IMR-90 (cell line): ENCODE measurements at regions of chr6 and their contacts with region 1.

Region 1: DNA sequence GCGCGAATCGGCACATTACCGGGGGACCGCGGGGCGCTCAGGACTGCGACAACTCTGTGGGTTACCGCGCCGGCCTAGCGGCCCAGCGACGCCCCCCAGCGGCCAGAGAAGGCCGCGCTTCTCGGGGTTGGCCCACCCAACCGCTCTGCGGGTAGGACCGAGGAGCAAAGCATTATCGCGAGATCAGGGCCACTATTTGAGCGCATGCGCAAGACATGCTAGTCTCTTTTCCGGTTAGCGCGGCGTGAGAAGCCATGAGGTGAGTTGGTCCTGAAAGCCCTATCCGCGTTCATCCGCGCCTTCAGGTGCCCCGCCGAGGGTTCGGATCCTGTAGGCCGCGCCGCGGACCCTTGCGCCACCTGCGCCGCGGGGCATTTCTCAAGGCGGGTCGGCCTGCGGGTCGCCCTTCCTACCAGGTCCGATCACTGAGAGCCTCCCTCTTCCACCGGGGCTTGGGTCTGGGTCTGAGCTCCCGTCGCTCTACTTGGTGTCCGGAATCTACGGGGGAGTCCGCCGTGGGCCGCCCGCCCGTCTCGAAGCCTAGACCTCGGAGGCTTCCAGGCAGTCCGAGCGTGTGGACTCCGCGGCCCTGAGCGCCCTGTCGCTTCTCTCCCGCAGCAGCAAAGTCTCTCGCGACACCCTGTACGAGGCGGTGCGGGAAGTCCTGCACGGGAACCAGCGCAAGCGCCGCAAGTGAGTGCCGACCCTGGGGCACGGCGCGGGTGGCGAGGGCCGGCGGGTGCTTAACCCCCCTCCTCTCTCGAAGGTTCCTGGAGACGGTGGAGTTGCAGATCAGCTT is at the start of gene RPL10A:
- DNase-seq: peak; percentile 96
- ATAC-seq: peak; percentile 88
- H3K4me3 ChIP-seq: peak within 1 kb of the TSS; percentile 71
- H3K27ac ChIP-seq: peak within 1 kb of the TSS; percentile 79
- H3K4me1 ChIP-seq: peaks cover 10% of the 10 kb centered on the region
- H3K27me3 ChIP-seq: no peaks in the 10 kb centered on the region
- CTCF ChIP-seq: peak; percentile 99
- POLR2A ChIP-seq: peak; percentile 99
- RAD21 ChIP-seq: peak; percentile 89
- total RNA-seq, gene RPL10A: 1,746 and 2,310 TPM in 2 replicates

Region 2: DNA sequence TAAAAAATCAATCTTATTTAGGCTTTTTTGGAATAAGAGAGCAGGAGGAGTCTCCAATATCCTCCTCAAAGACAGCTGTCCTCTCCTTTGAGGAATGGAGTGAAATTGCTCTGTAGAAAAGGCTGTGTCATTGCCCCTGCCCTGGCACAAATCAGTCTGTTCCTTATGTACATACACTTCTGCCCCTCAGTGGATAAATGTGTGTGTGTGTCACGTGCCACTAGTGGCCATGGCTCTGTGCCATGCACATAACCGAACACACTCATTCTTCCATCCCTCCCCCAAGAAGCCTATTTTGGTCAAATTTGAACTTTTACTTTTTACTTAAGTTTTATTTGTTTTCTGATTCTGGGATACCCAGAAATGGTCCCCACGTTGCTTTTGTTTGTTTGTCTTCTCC is 530.1 kb before region 1 on chr6:
- CTCF ChIA-PET with region 1: no interaction called
- POLR2A ChIA-PET with region 1: no interaction called
- dilution Hi-C with region 1: no loop called
- in situ Hi-C with region 1: no loop called
- intact Hi-C with region 1: no loop called
- DNase-seq: no peak
- ATAC-seq: no peak
- H3K4me3 ChIP-seq: no peak overlapping the region
- H3K27ac ChIP-seq: no peak overlapping the region
- H3K4me1 ChIP-seq: no peaks in the 10 kb centered on the region
- H3K27me3 ChIP-seq: no peaks in the 10 kb centered on the region
- CTCF ChIP-seq: no peak
- POLR2A ChIP-seq: no peak
- RAD21 ChIP-seq: no peak

Region 3: GRCh38 chr6:35297601-35298481 is 170.5 kb before region 1 on chr6 and contains the start of gene DEF6:
- CTCF ChIA-PET with region 1: no interaction called
- POLR2A ChIA-PET with region 1: no interaction called
- dilution Hi-C with region 1: no loop called
- in situ Hi-C with region 1: no loop called
- intact Hi-C with region 1: loop called (anchors 5 kb)
- DNase-seq: peak; percentile 82
- ATAC-seq: peak; percentile 94
- H3K4me3 ChIP-seq: peak within 1 kb of the TSS; percentile 15; the same call in 1 of the 2 replicates
- H3K27ac ChIP-seq: no peak within 1 kb of the TSS
- H3K4me1 ChIP-seq: peaks cover 4% of the 10 kb centered on the region; the same call in 1 of the 2 replicates
- H3K27me3 ChIP-seq: no peaks in the 10 kb centered on the region
- CTCF ChIP-seq: peak; percentile 75
- POLR2A ChIP-seq: no peak
- RAD21 ChIP-seq: peak; percentile 87
- total RNA-seq, gene DEF6: 1.9 and 2.5 TPM in 2 replicates

Region 4: GRCh38 chr6:35495660-35496504 is 27.5 kb after region 1 on chr6:
- CTCF ChIA-PET with region 1: no interaction called
- POLR2A ChIA-PET with region 1: interaction called, 10 read pairs
- dilution Hi-C with region 1: no loop called
- in situ Hi-C with region 1: no loop called
- intact Hi-C with region 1: loop called (anchors 2 kb)
- DNase-seq: no peak
- ATAC-seq: peak; percentile 4
- H3K4me3 ChIP-seq: peak overlapping the region; percentile 63
- H3K27ac ChIP-seq: peak overlapping the region; percentile 84
- H3K4me1 ChIP-seq: peaks cover 48% of the 10 kb centered on the region
- H3K27me3 ChIP-seq: no peaks in the 10 kb centered on the region
- CTCF ChIP-seq: no peak
- POLR2A ChIP-seq: no peak
- RAD21 ChIP-seq: no peak